ENCODE measurements at regions of chr12 and their contacts with region 1.

Region 1: GRCh38 chr12:101891462-101892273 is 14.3 kb downstream of the DRAM1 start:
- DNase-seq: peak; percentile 69
- ATAC-seq: peak; percentile 67
- H3K4me3 ChIP-seq: peak overlapping the region; percentile 36; the same call in 1 of the 2 replicates
- H3K27ac ChIP-seq: peak overlapping the region; percentile 24
- H3K4me1 ChIP-seq: peaks cover 44% of the 10 kb centered on the region
- H3K27me3 ChIP-seq: no peaks in the 10 kb centered on the region
- CTCF ChIP-seq: no peak

Region 2: DNA sequence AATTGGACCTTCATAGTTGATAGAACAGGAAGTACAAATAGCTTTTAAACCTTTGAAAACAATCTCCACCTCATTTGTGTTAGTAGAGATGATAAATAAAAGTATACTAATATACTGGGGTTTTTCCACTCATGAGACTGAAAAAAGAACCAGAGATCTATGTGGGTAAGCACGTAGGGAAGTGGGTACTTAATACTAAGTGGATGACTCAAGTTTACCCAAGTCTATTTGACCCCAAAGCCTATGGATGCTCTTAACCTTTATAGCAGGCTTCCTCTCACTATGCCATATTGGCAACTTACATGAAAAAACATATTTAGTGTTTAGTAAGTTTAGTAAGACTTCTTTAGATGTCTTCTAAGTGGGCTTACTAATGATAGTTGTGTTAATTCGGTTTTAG is 243.5 kb before region 1 on chr12:
- CTCF ChIA-PET with region 1: no interaction called
- POLR2A ChIA-PET with region 1: no interaction called
- intact Hi-C with region 1: no loop called
- DNase-seq: no peak
- ATAC-seq: no peak
- H3K4me3 ChIP-seq: no peak overlapping the region
- H3K27ac ChIP-seq: no peak overlapping the region
- H3K4me1 ChIP-seq: no peaks in the 10 kb centered on the region
- H3K27me3 ChIP-seq: peaks cover 45% of the 10 kb centered on the region
- CTCF ChIP-seq: no peak

Region 3: GRCh38 chr12:101876861-101877815 is 14.5 kb before region 1 on chr12 and contains the start of gene DRAM1:
- CTCF ChIA-PET with region 1: interaction called, 3 read pairs
- POLR2A ChIA-PET with region 1: interaction called, 12 read pairs
- intact Hi-C with region 1: loop called (anchors 2 kb)
- DNase-seq: peak; percentile 89
- ATAC-seq: peak; percentile 91
- H3K4me3 ChIP-seq: peak within 1 kb of the TSS; percentile 99
- H3K27ac ChIP-seq: peak within 1 kb of the TSS; percentile 74
- H3K4me1 ChIP-seq: peaks cover 12% of the 10 kb centered on the region
- H3K27me3 ChIP-seq: no peaks in the 10 kb centered on the region
- CTCF ChIP-seq: peak; percentile 31; the same call in 1 of the 2 replicates
- total RNA-seq, gene DRAM1: 4.0 and 5.2 TPM in 2 replicates

Region 4: GRCh38 chr12:102095675-102096263 is 204.1 kb after region 1 on chr12:
- CTCF ChIA-PET with region 1: no interaction called
- POLR2A ChIA-PET with region 1: no interaction called
- intact Hi-C with region 1: no loop called
- DNase-seq: peak; percentile 51
- ATAC-seq: peak; percentile 91
- H3K4me3 ChIP-seq: no peak overlapping the region
- H3K27ac ChIP-seq: no peak overlapping the region
- H3K4me1 ChIP-seq: no peaks in the 10 kb centered on the region
- H3K27me3 ChIP-seq: no peaks in the 10 kb centered on the region
- CTCF ChIP-seq: peak; percentile 76